Activated CD4-positive, alpha-beta memory T cell treated with anti-CD3 and anti-CD28 coated beads, Interleukin-2, amount 10 ng/mL, durations not matched to agents 7 days and 5 days (primary cell): ENCODE measurements at regions of chr3 and their contacts with region 1.

Region 1: GRCh38 chr3:50192689-50193141 is 1.3 kb downstream of the GNAT1 start:
- DNase-seq: peak; percentile 85
- H3K4me3 Mint-ChIP-seq: no peak overlapping the region
- H3K27ac Mint-ChIP-seq: no peak overlapping the region
- H3K4me1 Mint-ChIP-seq: peaks cover 12% of the 10 kb centered on the region
- H3K27me3 Mint-ChIP-seq: peaks cover 25% of the 10 kb centered on the region

Region 2: DNA sequence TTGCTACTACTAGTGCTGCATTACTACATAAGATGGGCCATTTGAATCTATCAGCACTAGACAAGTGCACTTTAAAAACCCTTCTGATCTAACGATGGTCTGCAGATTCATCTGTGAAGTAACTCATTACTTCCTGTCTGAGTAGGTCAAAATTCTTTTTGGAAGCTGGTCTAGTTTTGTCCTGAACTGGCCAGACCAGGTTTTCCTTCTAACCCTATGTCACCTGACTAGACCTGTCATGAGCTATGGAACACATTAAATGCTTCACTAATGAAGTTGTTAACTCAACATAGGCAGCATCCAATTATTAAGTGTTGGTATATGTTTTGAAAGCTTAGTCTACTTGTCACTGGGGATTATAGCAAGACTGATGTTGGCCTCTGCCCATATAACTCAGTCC is 114.1 kb before region 1 on chr3:
- CTCF ChIA-PET with region 1: no interaction called
- POLR2A ChIA-PET with region 1: no interaction called
- DNase-seq: no peak
- H3K4me3 Mint-ChIP-seq: no peak overlapping the region
- H3K27ac Mint-ChIP-seq: peak overlapping the region; percentile 4
- H3K4me1 Mint-ChIP-seq: peaks cover 25% of the 10 kb centered on the region
- H3K27me3 Mint-ChIP-seq: no peaks in the 10 kb centered on the region

Region 3: DNA sequence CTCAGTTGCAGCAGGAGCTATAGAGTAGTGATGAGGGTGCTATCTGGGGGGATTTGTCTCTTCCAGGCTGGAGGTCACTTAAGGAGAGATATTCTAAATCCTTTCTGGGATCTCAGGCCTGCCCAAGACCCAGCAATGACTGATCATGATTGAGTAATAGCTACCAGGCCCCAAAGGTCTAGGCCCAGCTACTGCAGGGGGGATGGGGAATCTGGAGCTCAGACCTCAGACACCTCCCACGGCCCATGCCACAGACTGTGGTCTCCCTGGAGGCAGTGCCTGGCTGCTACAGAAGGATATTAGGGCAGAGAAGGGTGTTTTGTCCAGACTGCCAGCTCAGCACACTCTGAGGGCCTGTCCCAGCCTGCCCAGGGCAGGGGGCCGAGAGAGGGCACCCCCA is 19.2 kb after region 1 on chr3:
- CTCF ChIA-PET with region 1: interaction called, 56 read pairs
- POLR2A ChIA-PET with region 1: no interaction called
- DNase-seq: no peak
- H3K4me3 Mint-ChIP-seq: no peak overlapping the region
- H3K27ac Mint-ChIP-seq: no peak overlapping the region
- H3K4me1 Mint-ChIP-seq: no peaks in the 10 kb centered on the region
- H3K27me3 Mint-ChIP-seq: peaks cover 13% of the 10 kb centered on the region

Region 4: DNA sequence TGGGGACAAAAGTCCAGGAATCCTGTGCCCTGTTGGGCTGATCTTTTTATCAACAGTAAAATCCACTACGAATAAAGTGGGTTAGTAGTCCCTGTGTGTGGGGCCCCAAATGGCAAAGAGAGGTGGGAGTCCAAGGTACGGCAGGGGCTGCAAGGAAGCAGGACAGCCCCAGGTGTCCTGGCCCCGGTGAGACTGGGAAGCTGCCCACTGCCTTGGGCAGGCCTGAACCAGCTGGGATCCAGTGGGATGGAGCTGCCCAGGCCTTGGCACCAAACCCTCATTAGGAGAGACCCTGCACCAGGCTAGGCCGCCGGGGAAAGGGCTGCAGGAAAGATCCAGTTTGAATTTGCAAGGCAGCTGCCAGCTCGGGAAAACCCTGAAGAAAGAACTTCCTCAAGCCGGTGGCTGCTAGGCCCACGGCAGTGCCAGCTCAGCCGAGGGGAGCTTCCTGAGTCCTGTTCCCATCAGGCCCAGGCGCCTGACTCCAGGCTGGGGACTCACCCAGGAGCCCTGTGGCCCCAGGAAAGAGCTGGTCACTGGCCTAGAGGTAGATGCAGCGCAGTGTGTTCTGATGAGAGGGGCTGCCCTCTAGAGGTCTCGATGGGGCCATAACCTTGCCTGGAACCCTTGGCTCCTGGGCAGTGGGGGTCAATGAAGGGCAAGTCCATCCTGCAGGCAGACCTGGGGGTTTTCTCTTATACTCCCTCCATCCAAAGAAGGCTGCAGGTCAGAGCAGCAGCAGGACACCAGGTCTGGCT is 28.9 kb after region 1 on chr3:
- CTCF ChIA-PET with region 1: interaction called, 101 read pairs
- POLR2A ChIA-PET with region 1: interaction called, 42 read pairs
- DNase-seq: no peak
- H3K4me3 Mint-ChIP-seq: no peak overlapping the region
- H3K27ac Mint-ChIP-seq: peak overlapping the region; percentile 16
- H3K4me1 Mint-ChIP-seq: peaks cover 13% of the 10 kb centered on the region
- H3K27me3 Mint-ChIP-seq: peaks cover 15% of the 10 kb centered on the region